Sciatic nerve (tissue), 2 donors: ENCODE measurements at regions of chr10 and their contacts with region 1.

Region 1: DNA sequence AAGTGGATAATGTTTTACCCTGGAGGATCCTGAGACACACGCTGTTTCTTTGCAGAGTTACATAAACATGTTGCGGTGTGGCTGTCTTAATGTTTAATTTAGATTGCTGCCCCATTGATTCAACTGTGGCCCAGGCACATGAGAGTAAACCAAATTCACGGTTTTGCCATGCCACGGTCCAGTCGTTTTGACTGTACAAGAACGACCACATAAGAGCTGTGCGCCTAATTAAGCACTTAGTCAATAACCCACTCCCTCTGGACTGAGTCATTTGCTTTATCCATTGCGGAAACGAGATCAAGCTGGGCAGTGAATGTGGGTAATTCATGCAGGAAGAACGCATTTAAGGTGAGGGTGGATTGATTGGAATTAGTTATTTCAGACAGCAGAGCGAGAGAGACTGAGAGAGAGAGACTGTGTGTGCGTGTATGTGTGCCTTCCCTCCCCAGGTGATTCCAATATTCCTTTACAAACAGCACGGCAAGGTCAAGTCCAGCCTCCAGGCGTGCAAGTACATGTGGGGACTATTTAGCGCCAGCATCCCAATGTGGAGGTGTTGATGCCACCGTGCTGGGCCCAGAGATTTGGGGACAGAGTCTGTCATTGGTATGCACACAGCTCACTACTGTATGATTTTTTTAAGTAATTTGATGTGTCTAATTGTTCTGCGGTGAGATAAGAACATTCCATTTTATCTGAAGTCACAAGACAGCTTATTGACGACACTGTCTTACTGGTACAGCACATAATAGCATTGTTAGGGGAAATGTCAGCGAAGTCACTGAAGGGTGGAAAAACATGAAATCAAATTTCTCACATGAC is 8.4 kb upstream of the TEX36 start:
- DNase-seq: no peak
- ATAC-seq: no peak

Region 2: GRCh38 chr10:125756196-125756595 is 64.8 kb after region 1 on chr10:
- intact Hi-C with region 1: loop called (anchors 2 kb)
- DNase-seq: no peak
- ATAC-seq: no peak